PC-3 (cell line): ENCODE measurements at regions of chr2 and their contacts with region 1.

Region 1: DNA sequence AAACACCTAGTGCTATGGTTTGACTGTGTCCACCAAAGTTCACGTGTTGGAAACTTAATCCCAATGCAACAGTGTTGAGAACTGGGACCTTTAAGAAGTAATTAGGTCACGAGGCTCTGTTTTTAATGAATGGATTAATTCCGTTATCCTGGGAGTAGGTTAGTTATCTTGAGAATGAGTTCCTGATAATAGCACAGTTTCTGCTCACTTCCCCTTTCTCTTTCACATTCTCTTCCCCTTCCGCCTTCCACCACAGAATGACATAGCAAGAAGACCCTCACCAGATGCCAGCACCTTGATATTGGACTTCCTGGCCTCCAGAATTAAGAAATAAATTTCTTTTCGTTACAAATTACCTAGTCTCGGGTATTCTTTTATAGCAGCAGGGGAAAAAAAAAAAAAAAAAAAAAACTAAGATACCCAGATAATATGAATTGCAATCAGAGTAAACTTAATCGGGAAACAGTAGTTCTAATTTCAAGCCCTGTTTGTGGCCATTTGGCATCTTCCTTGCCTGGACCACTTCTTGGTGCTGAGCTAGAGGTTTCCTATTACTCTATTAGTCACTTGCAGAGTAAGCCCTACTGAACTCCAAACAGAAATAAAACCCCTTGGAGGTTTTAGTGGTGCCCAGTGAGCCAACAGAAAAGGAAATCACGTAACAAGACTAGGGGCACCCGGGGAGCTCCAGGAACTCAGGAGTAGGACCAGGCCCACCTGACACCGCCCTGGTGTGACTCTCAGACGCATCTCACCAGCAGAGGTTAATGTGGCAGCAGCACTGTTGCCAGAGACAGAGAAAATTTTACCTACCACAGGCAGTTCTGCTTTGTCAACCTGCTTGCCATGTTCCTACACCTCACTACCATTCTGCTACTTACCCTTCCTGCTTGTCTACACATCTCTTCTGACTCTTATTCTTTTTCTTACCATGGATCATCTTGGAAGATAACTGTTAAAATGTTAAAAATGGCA is 147.6 kb upstream of the CAB39 start:
- DNase-seq: peak; percentile 68
- ATAC-seq: peak; percentile 76
- H3K4me3 ChIP-seq: no peak overlapping the region
- H3K27ac ChIP-seq: no peak overlapping the region
- H3K4me1 ChIP-seq: 0 out of 2 replicates have a peak, but pooled peaks cover 4% of the 10 kb centered on the region
- H3K27me3 ChIP-seq: no peaks in the 10 kb centered on the region
- CTCF ChIP-seq: no peak

Region 2: DNA sequence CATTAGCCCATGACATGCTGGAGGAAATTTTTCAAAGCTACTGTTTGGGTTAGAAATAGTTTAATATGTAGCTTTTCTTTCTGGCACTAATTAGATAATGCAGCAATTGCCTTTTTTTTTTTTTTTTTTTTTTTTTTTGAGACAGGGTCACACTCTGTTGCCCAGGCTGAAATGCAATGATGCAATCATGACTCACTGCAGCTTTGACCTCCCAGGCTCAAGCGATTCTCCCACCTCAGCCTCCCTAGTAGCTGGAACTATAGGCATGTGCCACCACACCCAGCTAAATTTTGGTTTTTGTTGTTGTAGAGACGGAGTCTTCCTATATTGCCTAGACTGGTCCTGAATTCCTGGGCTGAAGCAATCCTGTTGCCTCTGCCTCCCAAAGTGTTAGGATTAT is 12.9 kb before region 1 on chr2:
- CTCF ChIA-PET with region 1: no interaction called
- POLR2A ChIA-PET with region 1: interaction called, 10 read pairs
- intact Hi-C with region 1: no loop called
- DNase-seq: no peak
- ATAC-seq: no peak
- H3K4me3 ChIP-seq: no peak overlapping the region
- H3K27ac ChIP-seq: no peak overlapping the region
- H3K4me1 ChIP-seq: peaks cover 6% of the 10 kb centered on the region; the same call in 1 of the 2 replicates
- H3K27me3 ChIP-seq: no peaks in the 10 kb centered on the region
- CTCF ChIP-seq: no peak